CD14-positive monocyte (primary cell): ENCODE measurements at regions of chr14 and their contacts with region 1.

Region 1: DNA sequence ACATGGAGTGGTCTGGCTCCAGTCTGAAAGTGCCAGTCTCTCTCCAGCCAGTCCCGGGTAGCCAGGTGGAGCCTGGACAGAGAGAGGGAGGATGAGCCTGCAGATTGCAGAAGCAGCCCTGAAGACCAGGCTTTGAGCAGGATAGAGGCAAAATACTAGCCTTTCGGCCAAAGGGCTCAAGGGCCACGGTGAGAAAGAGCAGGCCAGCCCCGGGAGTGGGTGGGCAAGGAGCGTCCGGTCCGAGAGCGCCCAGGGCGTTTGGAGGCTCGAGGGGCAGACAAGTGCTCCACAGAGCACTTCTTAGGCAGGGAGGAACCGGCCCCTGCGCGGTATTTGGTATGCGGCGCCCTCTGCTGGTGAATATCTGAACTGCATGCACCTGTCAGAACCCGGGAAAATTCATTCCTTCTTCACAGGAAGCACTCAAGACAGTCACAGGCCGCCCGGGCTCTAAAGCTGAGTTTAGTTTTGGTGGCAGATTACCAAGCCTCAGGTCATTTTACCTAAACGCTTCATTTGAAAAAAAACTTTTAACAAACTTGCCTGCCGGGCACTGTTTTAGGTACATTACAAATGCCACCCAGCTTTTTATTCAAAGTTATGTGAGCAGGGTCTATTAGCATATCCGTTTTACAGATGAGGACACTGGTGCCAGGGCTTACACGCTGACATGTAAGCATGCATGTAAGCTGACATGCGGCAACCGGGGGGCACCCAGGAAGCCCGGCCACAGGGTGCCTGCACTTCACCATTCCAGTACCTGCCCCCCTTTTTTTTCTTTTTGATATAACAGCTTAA is 21.0 kb upstream of the PSMC1 start:
- DNase-seq: peak; percentile 52 to 67 (median 63)
- H3K4me3 ChIP-seq: no peak overlapping the region
- H3K4me3 Mint-ChIP-seq: no peak overlapping the region
- H3K27ac ChIP-seq: no peak overlapping the region
- H3K27ac Mint-ChIP-seq: no peak overlapping the region
- H3K4me1 ChIP-seq: no peaks in the 10 kb centered on the region
- H3K4me1 Mint-ChIP-seq: peaks cover 5% of the 10 kb centered on the region
- H3K27me3 ChIP-seq: no peaks in the 10 kb centered on the region
- H3K27me3 Mint-ChIP-seq: peaks cover 0 to 18% (median 2%) of the 10 kb centered on the region in 3 donors
- CTCF ChIP-seq: peak; percentile 99

Region 2: GRCh38 chr14:89936658-89937185 is 298.7 kb before region 1 on chr14:
- intact Hi-C with region 1: loop called in 1 of 2 experiments (anchors 10 kb)
- DNase-seq: no peak
- H3K4me3 ChIP-seq: no peak overlapping the region
- H3K4me3 Mint-ChIP-seq: no peak overlapping the region
- H3K27ac ChIP-seq: no peak overlapping the region
- H3K27ac Mint-ChIP-seq: no peak overlapping the region
- H3K4me1 ChIP-seq: no peaks in the 10 kb centered on the region
- H3K4me1 Mint-ChIP-seq: no peaks in the 10 kb centered on the region
- H3K27me3 ChIP-seq: no peaks in the 10 kb centered on the region
- H3K27me3 Mint-ChIP-seq: peaks cover 0 to 2% (median 0%) of the 10 kb centered on the region in 3 donors
- CTCF ChIP-seq: no peak

Region 3: GRCh38 chr14:89973234-89973823 is 262.0 kb before region 1 on chr14:
- intact Hi-C with region 1: loop called (anchors 1 to 2 kb)
- DNase-seq: peak; percentile 44 to 61 (median 60)
- H3K4me3 ChIP-seq: no peak overlapping the region
- H3K4me3 Mint-ChIP-seq: no peak overlapping the region
- H3K27ac ChIP-seq: no peak overlapping the region
- H3K27ac Mint-ChIP-seq: peak overlapping the region in 2 of 7 donors; percentile 62 to 84
- H3K4me1 ChIP-seq: no peaks in the 10 kb centered on the region
- H3K4me1 Mint-ChIP-seq: peaks cover 6% of the 10 kb centered on the region
- H3K27me3 ChIP-seq: no peaks in the 10 kb centered on the region
- H3K27me3 Mint-ChIP-seq: no peaks in the 10 kb centered on the region
- CTCF ChIP-seq: peak; percentile 89

Region 4: DNA sequence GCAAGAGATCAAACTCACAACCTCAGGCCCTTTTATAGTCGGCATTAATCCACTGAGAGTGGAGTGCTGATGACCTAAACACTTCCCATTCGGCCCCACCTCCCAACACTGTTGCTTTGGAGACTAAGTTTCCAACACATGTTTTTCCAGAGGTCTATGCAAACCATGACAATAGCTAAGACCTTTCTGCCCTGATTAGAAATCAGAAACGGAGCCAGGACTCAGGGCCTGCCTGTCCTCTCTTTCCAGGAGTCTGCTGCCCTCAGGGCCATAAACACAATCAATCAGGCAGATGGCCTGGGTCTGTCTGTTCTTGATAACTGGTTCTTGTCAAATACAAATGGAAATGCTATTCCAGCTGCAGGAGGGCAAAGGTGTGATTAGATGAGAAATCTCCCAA is 76.2 kb before region 1 on chr14:
- intact Hi-C with region 1: no loop called
- DNase-seq: no peak
- H3K4me3 ChIP-seq: no peak overlapping the region
- H3K4me3 Mint-ChIP-seq: no peak overlapping the region
- H3K27ac ChIP-seq: no peak overlapping the region
- H3K27ac Mint-ChIP-seq: peak overlapping the region in 1 of 7 donors; percentile 21
- H3K4me1 ChIP-seq: no peaks in the 10 kb centered on the region
- H3K4me1 Mint-ChIP-seq: no peaks in the 10 kb centered on the region
- H3K27me3 ChIP-seq: no peaks in the 10 kb centered on the region
- H3K27me3 Mint-ChIP-seq: peaks cover 5 to 15% (median 11%) of the 10 kb centered on the region in 3 donors
- CTCF ChIP-seq: no peak